ENCODE measurements at regions of chr6 and their contacts with region 1.

Region 1: GRCh38 chr6:37365762-37366161 is 12.0 kb downstream of the RNF8 start:
- DNase-seq: no peak
- H3K4me3 ChIP-seq: no peak overlapping the region
- CTCF ChIP-seq: peak; percentile 8

Region 2: GRCh38 chr6:37324131-37325033 is 41.4 kb before region 1 on chr6:
- CTCF ChIA-PET with region 1: interaction called, 13 read pairs
- POLR2A ChIA-PET with region 1: no interaction called
- DNase-seq: no peak
- H3K4me3 ChIP-seq: no peak overlapping the region
- CTCF ChIP-seq: no peak

Region 3: DNA sequence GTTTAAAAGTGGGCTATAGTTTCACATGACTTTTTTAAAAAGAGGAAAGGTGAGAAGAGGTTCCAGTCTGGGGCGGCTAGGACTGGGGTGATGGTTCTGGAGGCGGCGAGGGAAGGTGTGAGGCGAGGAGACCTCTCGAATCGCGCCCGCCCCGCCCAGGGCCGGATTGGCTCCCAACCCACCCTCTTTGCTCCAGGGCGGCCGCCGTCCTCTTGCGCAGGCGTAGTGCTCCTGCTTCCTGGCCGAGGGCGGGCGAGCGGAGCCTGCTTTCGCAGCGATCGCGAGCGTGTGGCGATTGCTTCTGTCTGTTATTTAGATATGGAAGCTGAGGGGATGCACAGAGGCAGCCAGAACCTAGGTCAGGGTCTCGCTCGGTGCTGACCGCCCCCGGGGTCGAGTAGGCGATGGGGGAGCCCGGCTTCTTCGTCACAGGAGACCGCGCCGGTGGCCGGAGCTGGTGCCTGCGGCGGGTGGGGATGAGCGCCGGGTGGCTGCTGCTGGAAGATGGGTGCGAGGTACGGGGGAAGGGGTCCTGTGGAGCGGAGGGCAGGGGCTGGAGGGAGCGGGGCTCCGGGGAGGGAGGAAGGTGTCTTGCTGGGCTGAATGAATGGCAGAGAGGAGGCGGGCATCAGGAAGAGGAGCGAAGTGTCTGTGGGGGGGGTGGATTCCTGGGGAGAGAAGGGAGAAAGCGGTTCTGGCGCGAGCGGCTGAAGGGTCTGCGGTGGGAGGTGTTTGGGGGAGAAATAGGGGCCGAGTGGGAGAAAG is 11.8 kb before region 1 on chr6 and contains the start of gene RNF8:
- CTCF ChIA-PET with region 1: interaction called, 14 read pairs
- POLR2A ChIA-PET with region 1: no interaction called
- DNase-seq: no peak
- H3K4me3 ChIP-seq: peak within 1 kb of the TSS; percentile 94
- CTCF ChIP-seq: no peak

Region 4: GRCh38 chr6:37381579-37381978 is 15.8 kb after region 1 on chr6:
- CTCF ChIA-PET with region 1: interaction called, 37 read pairs
- POLR2A ChIA-PET with region 1: no interaction called
- DNase-seq: no peak
- H3K4me3 ChIP-seq: no peak overlapping the region
- CTCF ChIP-seq: peak; percentile 24

Region 5: GRCh38 chr6:37449984-37450383 is 84.2 kb after region 1 on chr6:
- CTCF ChIA-PET with region 1: no interaction called
- POLR2A ChIA-PET with region 1: no interaction called
- DNase-seq: no peak
- H3K4me3 ChIP-seq: no peak overlapping the region
- CTCF ChIP-seq: no peak

Measured in AG04449 (cell line).